Endothelial cell of umbilical vein (primary cell): ENCODE measurements at regions of chr19 and their contacts with region 1.

Region 1: DNA sequence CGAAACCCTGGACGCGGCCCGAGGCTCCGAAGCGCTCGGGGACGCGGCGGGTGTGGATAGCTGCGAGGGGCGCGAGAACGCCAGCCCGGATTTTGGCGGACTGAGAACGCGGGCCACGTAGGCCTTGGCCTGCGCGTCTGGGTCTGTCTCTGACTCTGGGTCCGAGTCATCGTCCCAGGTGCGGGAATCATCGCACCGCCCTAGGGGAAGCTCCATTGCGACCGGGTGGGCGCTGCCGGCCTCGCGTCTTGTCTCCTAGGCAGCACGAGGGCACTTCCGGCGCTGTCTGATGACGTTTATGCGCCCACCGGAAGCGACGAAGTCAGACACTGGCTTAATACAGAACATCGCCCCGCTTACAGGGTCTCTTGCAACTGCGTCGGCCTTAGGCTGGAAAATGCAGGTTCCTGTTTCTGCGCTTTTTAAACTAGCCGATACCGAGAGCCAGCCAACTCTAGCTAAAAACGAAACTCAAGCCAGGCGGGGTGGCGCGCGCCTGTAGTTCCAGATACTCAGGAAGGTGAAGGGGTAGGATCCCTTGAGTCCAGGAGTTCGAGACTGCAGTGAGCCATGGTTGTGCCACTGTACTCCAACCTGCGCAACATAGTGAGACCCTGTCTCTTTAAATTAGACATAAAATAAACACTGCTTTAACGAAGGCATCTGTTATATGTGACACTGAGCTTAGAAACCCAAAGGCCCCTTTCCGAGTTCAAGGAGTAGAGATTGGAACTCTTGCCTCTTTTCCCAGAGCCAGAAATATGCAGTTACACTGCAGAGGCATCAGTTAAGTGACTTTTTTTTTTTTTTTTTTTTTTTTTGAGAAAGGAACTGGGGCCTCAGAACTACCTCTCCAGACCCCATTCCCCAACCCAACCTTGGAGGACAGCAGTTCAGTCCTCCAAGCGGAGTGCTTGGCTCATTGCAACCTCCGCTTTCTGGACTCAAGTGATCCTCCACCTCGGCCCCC is at the start of gene FBXW9:
- DNase-seq: peak; percentile 96
- H3K4me3 ChIP-seq: peak within 1 kb of the TSS; percentile 8 to 56 (median 31)
- H3K27ac ChIP-seq: peak within 1 kb of the TSS; percentile 34
- H3K4me1 ChIP-seq: peaks cover 15% of the 10 kb centered on the region
- H3K27me3 ChIP-seq: no peaks in the 10 kb centered on the region
- CTCF ChIP-seq: no peak
- POLR2A ChIP-seq: peak; percentile 88
- total RNA-seq, gene FBXW9: 11.6 and 12.4 TPM in 2 replicates

Region 2: GRCh38 chr19:12681074-12681951 is 15.3 kb before region 1 on chr19 and contains the start of gene DHPS:
- CTCF ChIA-PET with region 1: no interaction called
- POLR2A ChIA-PET with region 1: interaction called, 10 read pairs
- dilution Hi-C with region 1: no loop called
- intact Hi-C with region 1: loop called (anchors 1 kb)
- DNase-seq: peak; percentile 95
- H3K4me3 ChIP-seq: peak within 1 kb of the TSS; percentile 15 to 77 (median 54)
- H3K27ac ChIP-seq: peak within 1 kb of the TSS; percentile 80
- H3K4me1 ChIP-seq: no peaks in the 10 kb centered on the region
- H3K27me3 ChIP-seq: no peaks in the 10 kb centered on the region
- CTCF ChIP-seq: peak in 1 of 2 donors; percentile 18
- POLR2A ChIP-seq: peak; percentile 70
- total RNA-seq, gene DHPS: 68.4 and 77.4 TPM in 2 replicates

Region 3: DNA sequence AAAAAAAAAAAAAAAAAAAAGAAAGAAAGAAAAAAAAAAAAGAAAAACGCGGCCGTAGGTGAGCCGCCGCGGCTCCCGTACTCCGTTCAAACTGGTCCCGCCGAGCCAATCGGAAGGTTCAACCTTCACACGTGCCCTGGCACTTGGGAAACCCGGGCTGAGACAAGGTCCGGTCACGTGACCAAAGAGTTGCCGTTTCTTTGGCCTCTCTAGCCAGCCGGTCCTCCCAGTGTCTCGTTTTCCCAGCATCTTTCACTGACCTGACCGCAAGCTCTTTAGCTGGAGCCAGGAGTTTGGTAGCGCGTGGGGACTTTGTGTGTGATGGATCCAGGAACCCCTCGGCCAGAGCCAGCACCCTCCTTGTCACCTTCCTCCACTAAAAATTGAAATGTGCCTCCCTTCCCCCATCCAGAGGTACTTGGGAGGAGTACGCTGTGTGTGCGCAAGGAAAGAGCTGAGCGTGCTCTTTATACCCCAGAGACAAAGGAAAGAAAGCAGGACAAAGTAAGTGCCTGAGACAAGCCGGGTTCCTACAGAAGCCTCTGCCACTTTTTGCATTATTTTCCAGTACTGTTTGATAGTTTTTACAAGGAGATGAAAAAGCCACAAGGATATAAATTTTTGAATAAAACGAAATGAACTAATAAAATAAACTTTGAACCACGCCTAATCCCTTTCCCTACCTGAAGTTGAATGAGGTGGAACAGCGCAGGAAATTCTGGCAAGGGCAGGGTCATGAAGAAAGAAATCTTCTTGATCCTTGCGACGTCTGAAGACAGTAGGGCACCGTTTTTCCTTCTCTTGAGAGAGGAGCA is 26.1 kb after region 1 on chr19:
- CTCF ChIA-PET with region 1: no interaction called
- POLR2A ChIA-PET with region 1: interaction called, 5 read pairs
- dilution Hi-C with region 1: no loop called
- intact Hi-C with region 1: loop called (anchors 1 kb)
- DNase-seq: peak; percentile 97
- H3K4me3 ChIP-seq: peak overlapping the region; percentile 62 to 88 (median 62)
- H3K27ac ChIP-seq: peak overlapping the region; percentile 57
- H3K4me1 ChIP-seq: peaks cover 10% of the 10 kb centered on the region
- H3K27me3 ChIP-seq: no peaks in the 10 kb centered on the region
- CTCF ChIP-seq: no peak
- POLR2A ChIP-seq: peak; percentile 62

Region 4: DNA sequence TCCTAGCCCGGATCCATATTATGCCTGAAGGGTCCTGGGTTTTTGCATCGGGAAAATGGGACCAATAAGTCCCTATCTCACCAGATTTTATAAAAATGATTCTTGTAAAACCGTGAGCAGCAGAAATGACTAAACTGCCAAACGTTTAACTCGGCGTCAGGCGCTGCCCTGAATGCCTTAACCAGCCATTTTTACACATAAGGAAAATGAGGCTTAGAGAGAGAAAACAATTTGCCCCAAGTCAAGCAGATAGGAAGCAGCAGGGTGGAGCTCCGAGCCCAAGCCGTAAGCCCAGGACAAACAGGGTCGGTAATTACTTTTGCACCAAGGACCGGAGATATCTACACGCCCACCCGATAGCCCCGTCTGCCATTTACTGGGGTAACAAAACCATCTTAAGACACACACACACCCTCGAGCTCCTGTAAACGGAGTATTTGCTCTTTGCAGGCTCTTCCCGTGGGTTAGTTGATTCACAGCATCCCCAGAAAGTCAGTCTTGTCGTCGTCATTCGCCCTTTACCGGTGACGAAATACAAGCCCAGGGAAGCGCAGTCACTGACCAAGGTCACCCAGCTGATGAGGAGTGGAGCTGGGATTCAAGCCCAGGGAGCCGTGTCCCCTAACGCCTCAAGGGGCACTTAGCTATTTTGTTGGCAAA is 1051.6 kb after region 1 on chr19:
- CTCF ChIA-PET with region 1: no interaction called
- POLR2A ChIA-PET with region 1: no interaction called
- dilution Hi-C with region 1: no loop called
- intact Hi-C with region 1: no loop called
- DNase-seq: peak; percentile 42
- H3K4me3 ChIP-seq: peak overlapping the region; percentile 85 to 93 (median 85)
- H3K27ac ChIP-seq: peak overlapping the region; percentile 82
- H3K4me1 ChIP-seq: peaks cover 13% of the 10 kb centered on the region
- H3K27me3 ChIP-seq: no peaks in the 10 kb centered on the region
- CTCF ChIP-seq: no peak
- POLR2A ChIP-seq: peak; percentile 61